Astrocyte of the cerebellum (primary cell): ENCODE measurements at regions of chrX and their contacts with region 1.

Region 1: GRCh38 chrX:41596596-41596995 is 92.2 kb upstream of the GPR34 start:
- DNase-seq: no peak
- H3K4me3 ChIP-seq: no peak overlapping the region
- CTCF ChIP-seq: no peak

Region 2: GRCh38 chrX:41653125-41653524 is 56.5 kb after region 1 on chrX:
- in situ Hi-C with region 1: loop called (anchors 5 kb)
- DNase-seq: no peak
- H3K4me3 ChIP-seq: no peak overlapping the region
- CTCF ChIP-seq: no peak